Activated naive CD4-positive, alpha-beta T cell treated with anti-CD3 and anti-CD28 coated beads, Interleukin-2, amount 10 ng/mL, durations not matched to agents 7 days and 5 days (primary cell): ENCODE measurements at regions of chr5 and their contacts with region 1.

Region 1: DNA sequence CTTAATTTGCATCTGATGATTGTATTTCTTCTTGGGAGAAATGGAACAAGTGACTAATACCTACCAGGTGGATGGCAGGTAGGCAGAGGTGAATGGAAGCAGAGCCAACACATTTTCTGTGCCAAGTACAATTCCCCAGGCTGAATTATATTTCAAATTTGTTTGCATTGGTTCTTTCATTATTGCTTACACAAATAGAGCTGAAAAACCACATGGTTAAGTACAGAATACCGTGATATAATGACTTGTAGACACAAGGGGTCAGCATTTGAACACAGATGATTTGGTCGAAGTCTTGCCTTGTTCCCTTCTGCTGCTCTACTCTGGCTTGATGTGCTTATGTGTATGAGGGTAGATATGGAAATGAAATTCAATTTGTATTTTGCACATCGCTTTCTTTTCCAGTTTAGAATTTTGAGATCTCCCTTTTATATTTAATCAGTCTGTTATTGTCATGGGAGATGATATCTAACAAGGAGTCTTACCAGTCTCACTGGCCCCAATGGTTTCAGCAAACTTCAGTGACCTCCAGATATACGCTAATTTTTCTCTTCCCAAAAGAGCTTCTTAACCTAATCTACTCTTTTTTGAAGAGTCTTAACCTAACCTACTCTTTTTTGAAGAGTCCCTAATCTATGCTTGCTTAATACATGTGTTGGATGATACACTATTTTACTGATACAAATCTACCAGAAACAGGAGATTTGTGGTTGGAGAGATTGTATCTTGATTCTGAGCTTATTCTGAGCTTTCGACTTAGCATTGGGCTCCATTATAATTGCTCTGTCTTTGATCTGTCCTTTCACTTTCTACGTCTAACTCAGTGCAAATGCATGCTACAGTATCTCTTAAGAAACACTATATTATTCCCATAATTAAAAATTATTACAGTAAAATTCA is 88.1 kb downstream of the PCSK1 start:
- DNase-seq: peak; percentile 28
- H3K4me3 Mint-ChIP-seq: peak overlapping the region; percentile 5
- H3K27ac Mint-ChIP-seq: peak overlapping the region; percentile 35
- H3K4me1 Mint-ChIP-seq: peaks cover 20% of the 10 kb centered on the region
- H3K27me3 Mint-ChIP-seq: peaks cover 10% of the 10 kb centered on the region

Region 2: GRCh38 chr5:96151891-96152290 is 193.0 kb before region 1 on chr5:
- CTCF ChIA-PET with region 1: no interaction called
- DNase-seq: no peak
- H3K4me3 Mint-ChIP-seq: no peak overlapping the region
- H3K27ac Mint-ChIP-seq: no peak overlapping the region
- H3K4me1 Mint-ChIP-seq: no peaks in the 10 kb centered on the region
- H3K27me3 Mint-ChIP-seq: peaks cover 6% of the 10 kb centered on the region

Region 3: DNA sequence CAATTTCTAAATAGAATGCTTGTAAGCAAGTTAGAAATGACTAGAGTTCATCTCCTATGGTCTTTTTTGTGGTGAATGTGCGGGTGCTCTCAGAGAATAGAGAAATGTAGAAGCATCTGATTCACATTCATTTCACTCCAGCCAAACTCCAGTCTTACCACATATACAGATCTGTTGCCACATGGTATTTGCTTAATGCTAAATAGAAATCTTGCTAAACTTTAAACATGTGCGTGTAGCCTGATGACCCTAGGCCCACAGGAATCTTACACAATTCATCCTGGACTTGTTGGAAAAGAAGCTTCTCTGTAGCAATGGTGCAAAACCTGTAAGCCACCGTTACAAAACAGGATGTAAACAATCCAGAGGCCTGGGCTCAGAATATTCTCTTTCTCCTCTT is 47.1 kb before region 1 on chr5:
- CTCF ChIA-PET with region 1: no interaction called
- DNase-seq: no peak
- H3K4me3 Mint-ChIP-seq: no peak overlapping the region
- H3K27ac Mint-ChIP-seq: no peak overlapping the region
- H3K4me1 Mint-ChIP-seq: no peaks in the 10 kb centered on the region
- H3K27me3 Mint-ChIP-seq: no peaks in the 10 kb centered on the region

Region 4: GRCh38 chr5:96548947-96549346 is 204.0 kb after region 1 on chr5:
- CTCF ChIA-PET with region 1: interaction called, 10 read pairs
- DNase-seq: no peak
- H3K4me3 Mint-ChIP-seq: no peak overlapping the region
- H3K27ac Mint-ChIP-seq: no peak overlapping the region
- H3K4me1 Mint-ChIP-seq: no peaks in the 10 kb centered on the region
- H3K27me3 Mint-ChIP-seq: peaks cover 8% of the 10 kb centered on the region

Region 5: GRCh38 chr5:96595300-96596090 is 250.6 kb after region 1 on chr5:
- CTCF ChIA-PET with region 1: interaction called, 124 read pairs
- DNase-seq: peak; percentile 27
- H3K4me3 Mint-ChIP-seq: no peak overlapping the region
- H3K27ac Mint-ChIP-seq: no peak overlapping the region
- H3K4me1 Mint-ChIP-seq: no peaks in the 10 kb centered on the region
- H3K27me3 Mint-ChIP-seq: peaks cover 8% of the 10 kb centered on the region

Region 6: GRCh38 chr5:96601811-96602244 is 256.9 kb after region 1 on chr5:
- CTCF ChIA-PET with region 1: interaction called, 124 read pairs
- DNase-seq: peak; percentile 59
- H3K4me3 Mint-ChIP-seq: no peak overlapping the region
- H3K27ac Mint-ChIP-seq: no peak overlapping the region
- H3K4me1 Mint-ChIP-seq: no peaks in the 10 kb centered on the region
- H3K27me3 Mint-ChIP-seq: peaks cover 18% of the 10 kb centered on the region